GM13976 (cell line): ENCODE measurements at regions of chr11 and their contacts with region 1.

Region 1: DNA sequence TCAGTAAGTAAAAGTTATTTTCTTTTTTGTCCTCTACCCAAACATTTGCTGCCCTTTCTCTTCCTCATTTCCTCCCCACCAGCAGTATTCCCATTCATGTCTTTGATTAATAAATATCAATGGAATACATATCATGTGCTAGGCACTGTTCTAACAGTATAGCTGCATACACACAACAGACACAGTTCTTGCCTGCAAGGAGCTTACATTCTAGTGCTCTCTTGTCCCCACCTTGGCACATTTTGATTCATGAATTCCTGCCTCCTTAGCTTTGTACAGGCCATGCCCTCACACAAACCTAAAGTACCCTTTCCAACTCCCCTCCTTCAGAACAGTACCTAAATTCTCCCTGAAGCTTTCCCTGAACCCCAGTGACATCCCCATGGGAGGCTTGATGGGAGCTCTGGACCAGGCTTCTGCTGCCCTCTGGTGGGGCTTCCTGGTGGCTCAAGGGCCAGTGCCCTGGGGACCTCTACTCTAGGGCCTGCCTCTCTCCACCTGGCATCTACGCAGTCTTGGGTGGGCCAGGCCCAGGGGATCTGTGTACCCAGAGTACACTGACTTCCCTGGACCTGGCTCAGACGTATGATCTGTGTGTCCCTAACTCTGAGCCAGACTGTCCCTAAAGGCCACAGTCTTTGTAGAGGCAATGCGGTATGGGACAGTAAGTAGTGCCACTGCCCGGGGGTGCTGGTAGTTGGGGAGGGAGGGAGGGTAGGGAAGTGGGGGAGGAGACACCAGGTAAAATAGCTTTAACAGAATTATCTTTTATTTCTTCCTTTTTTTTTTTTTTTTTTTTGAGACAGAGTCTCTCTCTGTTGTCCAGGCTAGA is 14.1 kb downstream of the RPS13 start:
- DNase-seq: peak; percentile 63
- CTCF ChIP-seq: peak; percentile 76

Region 2: DNA sequence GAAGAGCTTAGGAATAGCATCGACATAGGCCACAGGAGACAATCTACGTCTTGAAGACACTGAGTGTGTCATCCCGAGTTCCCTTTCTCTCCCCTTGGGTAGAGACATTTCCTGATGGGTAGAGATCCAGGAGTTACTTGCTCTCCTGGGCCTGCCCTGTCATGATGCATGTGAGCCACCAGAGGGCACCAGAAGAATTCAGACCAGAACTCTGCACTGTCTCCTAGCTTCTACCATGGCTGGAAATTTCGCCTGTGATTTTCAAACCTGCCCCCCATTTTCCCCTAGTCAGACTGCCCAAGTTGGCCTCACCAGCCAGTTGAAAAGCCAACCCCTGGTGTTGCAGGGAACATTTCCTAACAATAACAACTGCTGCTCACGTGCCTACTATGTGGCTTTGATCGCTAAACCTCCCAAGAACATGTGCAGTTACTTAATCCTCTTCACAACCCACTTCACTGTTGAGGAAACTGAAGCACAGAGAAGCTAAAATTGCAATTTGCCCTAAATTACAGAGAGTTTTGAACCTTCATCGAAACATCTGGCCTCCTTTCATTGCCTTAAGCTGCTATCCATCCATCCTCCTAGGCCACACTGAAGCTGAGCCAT is 277.8 kb before region 1 on chr11:
- in situ Hi-C with region 1: loop called (anchors 10 kb)
- DNase-seq: peak; percentile 84
- CTCF ChIP-seq: peak; percentile 86

Region 3: GRCh38 chr11:16809886-16810668 is 253.3 kb before region 1 on chr11:
- in situ Hi-C with region 1: loop called (anchors 10 kb)
- DNase-seq: no peak
- CTCF ChIP-seq: no peak

Region 4: DNA sequence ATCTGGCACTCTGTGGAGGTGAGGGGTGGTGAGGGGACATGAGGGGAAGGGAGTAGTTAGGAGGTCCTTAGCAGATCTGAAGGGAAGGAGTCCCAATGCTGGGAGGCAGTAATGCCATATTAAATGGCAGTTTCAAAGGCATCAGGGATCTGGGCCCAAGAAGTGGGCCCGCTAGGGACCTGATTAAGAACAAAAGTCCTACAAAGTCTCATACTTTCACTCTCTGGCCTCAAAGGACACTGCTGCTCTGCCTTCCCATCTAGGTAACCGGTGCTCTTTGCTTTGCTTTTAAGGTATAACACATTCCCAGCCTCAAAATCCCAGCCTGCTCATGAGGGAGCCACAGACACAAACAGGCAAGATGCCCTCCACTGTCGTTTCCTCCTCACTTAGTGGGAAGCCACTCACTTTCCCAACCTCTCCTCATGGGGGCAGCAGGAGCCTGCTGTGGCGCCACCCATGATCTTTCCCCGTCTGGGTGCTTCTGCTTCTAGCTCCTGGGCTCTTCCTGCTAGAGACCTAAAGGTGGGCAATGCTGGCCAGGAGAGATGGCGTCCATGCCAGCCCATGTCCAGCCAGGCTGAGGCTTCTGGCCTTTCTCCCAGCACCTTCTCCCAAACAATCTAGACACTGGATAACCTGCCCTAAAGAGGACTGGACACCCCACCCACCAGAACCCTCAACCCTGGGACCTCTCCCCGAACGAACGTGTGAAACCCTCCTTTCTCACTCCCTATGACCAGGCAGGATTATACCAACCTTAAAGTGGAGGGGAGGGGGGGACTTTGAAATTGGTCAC is 117.5 kb before region 1 on chr11:
- in situ Hi-C with region 1: loop called (anchors 10 kb)
- DNase-seq: peak; percentile 75
- CTCF ChIP-seq: peak; percentile 80